Right cardiac atrium (tissue), 5 donors: ENCODE measurements at regions of chr18 and their contacts with region 1.

Region 1: DNA sequence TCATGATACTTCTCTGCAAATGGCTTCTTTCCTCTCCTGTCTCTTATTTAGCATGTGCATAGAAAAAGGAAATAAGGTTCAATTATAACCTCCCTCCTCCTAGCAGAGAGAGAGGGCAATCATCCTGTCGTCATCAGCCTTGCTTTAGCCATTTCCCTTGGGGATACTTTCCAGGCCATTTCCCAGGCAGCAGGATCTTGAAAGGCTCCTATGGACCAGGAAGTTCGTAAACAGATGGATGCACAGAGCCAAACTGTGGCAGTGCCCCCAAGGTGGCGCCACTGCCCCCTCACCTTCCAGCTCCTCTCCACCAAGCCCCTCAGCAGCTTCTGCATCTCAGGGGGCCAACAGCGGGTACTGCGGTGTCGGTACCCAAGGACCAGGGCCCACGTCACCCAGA is 157.4 kb downstream of the DTNA start:
- DNase-seq: peak; percentile 28 to 53 (median 46)
- ATAC-seq: peak; percentile 57 to 66
- H3K4me3 ChIP-seq: no peak overlapping the region
- H3K27ac ChIP-seq: peak overlapping the region; percentile 47
- H3K4me1 ChIP-seq: no peaks in the 10 kb centered on the region
- H3K27me3 ChIP-seq: no peaks in the 10 kb centered on the region

Region 2: GRCh38 chr18:34809451-34810072 is 58.0 kb before region 1 on chr18:
- intact Hi-C with region 1: no loop called
- DNase-seq: peak; percentile 67 to 88 (median 75)
- ATAC-seq: peak; percentile 71 to 73
- H3K4me3 ChIP-seq: no peak overlapping the region
- H3K27ac ChIP-seq: no peak overlapping the region
- H3K4me1 ChIP-seq: no peaks in the 10 kb centered on the region
- H3K27me3 ChIP-seq: no peaks in the 10 kb centered on the region

Region 3: GRCh38 chr18:34929336-34929780 is 61.8 kb after region 1 on chr18:
- intact Hi-C with region 1: loop called in 1 of 4 experiments (anchors 10 kb)
- DNase-seq: no peak
- ATAC-seq: no peak
- H3K4me3 ChIP-seq: no peak overlapping the region
- H3K27ac ChIP-seq: no peak overlapping the region
- H3K4me1 ChIP-seq: no peaks in the 10 kb centered on the region
- H3K27me3 ChIP-seq: no peaks in the 10 kb centered on the region

Region 4: GRCh38 chr18:34976899-34977837 is 109.6 kb after region 1 on chr18:
- intact Hi-C with region 1: loop called in 1 of 4 experiments (anchors 5 kb)
- DNase-seq: peak; percentile 77 to 90 (median 90)
- ATAC-seq: peak; percentile 81 to 84
- H3K4me3 ChIP-seq: peak overlapping the region; percentile 79
- H3K27ac ChIP-seq: no peak overlapping the region
- H3K4me1 ChIP-seq: no peaks in the 10 kb centered on the region
- H3K27me3 ChIP-seq: no peaks in the 10 kb centered on the region

Region 5: DNA sequence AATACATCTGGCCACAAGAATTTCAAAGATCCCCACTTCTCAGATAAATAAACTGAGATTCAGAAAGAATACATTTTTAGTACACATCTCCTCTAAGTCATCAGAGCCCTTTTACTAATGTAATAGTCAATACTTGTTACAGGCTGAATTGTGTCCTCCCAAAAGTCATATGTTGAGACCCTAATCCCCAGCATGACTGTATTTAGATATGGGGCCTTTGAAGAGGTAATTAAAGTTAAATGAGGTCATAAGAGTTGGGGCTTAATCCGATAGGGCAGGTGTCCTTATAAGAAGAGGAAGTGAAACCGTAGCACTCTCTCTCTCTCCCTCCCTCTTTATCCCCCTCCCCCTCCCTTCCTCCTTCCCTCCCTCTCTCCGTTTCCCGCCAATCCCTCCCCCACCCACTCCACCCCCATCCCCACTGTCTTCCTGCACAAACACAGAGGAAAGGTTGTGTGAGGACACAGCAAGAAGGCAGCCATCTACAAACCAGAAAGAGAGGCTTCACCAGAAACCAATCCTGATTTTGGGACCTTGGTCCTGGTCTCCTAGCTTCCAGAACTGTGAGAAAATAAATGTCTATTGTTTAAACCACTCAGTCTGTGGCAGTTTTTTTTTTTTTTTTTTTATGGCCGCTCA is 306.7 kb after region 1 on chr18:
- intact Hi-C with region 1: no loop called
- DNase-seq: no peak
- ATAC-seq: peak in 1 of 2 donors; percentile 16
- H3K4me3 ChIP-seq: no peak overlapping the region
- H3K27ac ChIP-seq: no peak overlapping the region
- H3K4me1 ChIP-seq: peaks cover 1% of the 10 kb centered on the region
- H3K27me3 ChIP-seq: no peaks in the 10 kb centered on the region